ENCODE measurements at regions of chr2 and their contacts with region 1.

Region 1: GRCh38 chr2:24360050-24360962 is at the start of gene ITSN2:
- DNase-seq: peak; percentile 93
- total RNA-seq, gene ITSN2: 46.1 TPM

Region 2: GRCh38 chr2:24084386-24085361 is 275.6 kb before region 1 on chr2 and contains the start of gene TP53I3:
- intact Hi-C with region 1: loop called (anchors 10 kb)
- DNase-seq: peak; percentile 94
- total RNA-seq, gene TP53I3: 8.3 TPM

Region 3: DNA sequence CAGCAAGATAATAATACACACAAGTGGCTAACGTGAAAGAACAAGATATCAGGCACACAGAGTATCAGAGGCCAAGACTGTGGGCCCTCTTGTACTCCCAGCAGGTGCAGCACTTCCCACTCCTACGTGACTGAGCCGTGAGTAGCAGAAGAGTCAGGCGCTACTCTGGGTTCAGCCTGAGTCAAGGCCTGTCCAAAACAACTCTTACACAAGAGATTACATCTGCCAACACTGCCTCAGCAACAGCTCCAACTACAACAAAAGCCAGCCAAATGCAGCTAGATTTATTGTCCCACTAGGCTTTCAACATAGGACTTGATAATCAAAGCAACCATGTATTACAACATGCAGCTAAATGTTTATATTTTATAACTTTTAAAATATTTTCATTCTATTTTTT is 56.2 kb before region 1 on chr2:
- intact Hi-C with region 1: loop called (anchors 5 kb)
- DNase-seq: peak; percentile 79

Region 4: GRCh38 chr2:24454294-24454693 is 94.0 kb after region 1 on chr2:
- intact Hi-C with region 1: no loop called
- DNase-seq: no peak